AG04449 (cell line): ENCODE measurements at regions of chr4 and their contacts with region 1.

Region 1: GRCh38 chr4:123564758-123565346 is 168.3 kb downstream of the SPRY1 start:
- DNase-seq: no peak
- H3K4me3 ChIP-seq: no peak overlapping the region
- CTCF ChIP-seq: peak; percentile 84

Region 2: GRCh38 chr4:123396307-123397143 is 168.3 kb before region 1 on chr4 and contains the start of gene SPRY1:
- CTCF ChIA-PET with region 1: interaction called, 10 read pairs
- POLR2A ChIA-PET with region 1: no interaction called
- DNase-seq: no peak
- H3K4me3 ChIP-seq: peak within 1 kb of the TSS; percentile 67
- CTCF ChIP-seq: no peak

Region 3: DNA sequence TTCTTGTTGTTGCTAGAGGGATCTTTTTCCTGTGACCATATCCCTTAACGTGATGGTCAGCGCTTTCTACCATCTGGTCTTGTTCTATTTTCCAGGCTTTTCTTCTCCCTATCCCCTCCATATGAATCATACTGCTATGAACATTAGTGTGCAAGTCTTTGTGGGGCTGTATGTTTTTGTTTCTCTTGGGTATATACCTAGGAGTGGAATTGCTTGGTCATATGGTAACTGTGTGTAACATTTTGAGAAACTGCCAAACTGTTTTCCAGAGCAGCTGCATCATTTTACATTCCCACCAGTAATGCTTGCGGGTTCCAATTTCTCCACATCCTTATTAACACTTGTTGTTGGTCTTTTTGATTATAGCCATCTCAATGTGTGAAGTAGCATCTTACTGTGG is 46.9 kb before region 1 on chr4:
- CTCF ChIA-PET with region 1: no interaction called
- POLR2A ChIA-PET with region 1: no interaction called
- DNase-seq: no peak
- H3K4me3 ChIP-seq: no peak overlapping the region
- CTCF ChIP-seq: no peak

Region 4: DNA sequence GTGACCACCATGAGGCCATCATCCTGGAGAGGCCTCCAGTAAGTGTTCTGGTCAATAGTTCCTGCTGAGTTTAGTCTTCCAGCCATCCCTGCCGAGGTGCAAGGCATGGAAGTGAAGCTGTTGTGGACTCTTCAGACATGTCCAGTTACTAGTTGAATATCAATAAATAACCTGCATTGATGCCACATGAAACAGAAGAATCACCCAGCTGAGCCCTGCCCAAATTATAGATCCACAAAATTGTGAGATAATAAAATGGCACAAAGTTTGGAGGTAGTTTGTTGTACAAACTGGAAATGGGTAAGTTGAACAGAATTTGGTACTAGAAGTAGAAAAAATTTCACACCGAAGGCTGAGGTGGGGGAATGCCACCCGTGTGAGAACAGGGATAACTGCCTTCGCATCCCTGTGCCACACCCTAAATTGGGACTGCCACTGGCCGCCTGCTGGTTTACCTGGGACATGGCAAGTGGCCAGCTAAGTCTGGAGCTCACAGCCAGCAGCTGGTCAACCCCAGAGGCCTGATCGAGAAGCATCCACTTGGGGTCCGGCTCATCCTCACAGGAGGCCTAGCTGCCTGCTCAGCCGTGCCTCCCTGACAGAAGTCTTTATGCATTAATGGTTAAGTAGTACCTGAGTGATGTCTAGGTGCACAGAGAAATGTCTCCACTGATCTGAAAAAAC is 16.3 kb after region 1 on chr4:
- CTCF ChIA-PET with region 1: interaction called, 17 read pairs
- POLR2A ChIA-PET with region 1: no interaction called
- DNase-seq: no peak
- H3K4me3 ChIP-seq: no peak overlapping the region
- CTCF ChIP-seq: no peak